Left cardiac atrium (tissue), 4 donors: ENCODE measurements at regions of chr11 and their contacts with region 1.

Region 1: GRCh38 chr11:65988791-65989592 is 13.0 kb downstream of the EIF1AD start:
- DNase-seq: peak; percentile 89
- ATAC-seq: peak; percentile 98 to 99

Region 2: DNA sequence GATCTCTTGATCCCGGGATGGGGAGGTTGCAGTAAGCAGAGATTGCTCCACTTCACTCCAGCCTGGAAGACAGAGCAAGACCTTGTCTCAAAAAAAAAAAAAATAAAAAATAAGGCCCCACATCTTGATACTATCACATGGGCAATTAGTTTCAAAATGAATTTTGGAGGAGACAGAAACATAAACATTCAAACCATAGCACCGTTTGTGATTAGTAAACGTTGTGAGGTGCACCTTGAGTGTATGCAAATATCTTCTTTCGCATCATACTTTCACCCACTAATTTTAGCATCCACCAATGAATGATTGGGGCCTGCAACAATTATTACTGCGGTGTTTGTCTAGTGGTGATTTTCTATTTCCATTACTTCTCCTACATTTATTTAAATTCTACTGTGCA is 830.0 kb before region 1 on chr11:
- intact Hi-C with region 1: no loop called
- DNase-seq: no peak
- ATAC-seq: no peak

Region 3: DNA sequence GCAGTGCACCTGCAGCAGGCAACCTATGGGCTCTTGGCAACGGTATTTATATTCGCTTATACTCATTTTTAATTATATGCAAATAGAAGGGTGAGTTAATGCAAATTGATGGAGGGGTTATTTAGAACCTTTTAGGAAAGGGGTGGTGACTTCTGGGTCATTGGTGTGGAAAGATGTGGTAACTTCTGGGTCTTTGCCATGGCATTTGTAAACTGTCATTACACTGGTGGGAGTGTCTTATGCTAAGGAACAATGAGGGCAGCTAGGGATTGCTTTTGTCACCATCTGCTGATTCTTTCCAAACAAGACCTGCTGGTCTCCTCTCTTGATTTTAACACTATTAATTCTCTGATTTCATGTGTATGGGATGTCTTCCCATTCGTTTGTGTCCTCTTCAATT is 288.6 kb before region 1 on chr11:
- intact Hi-C with region 1: loop called (anchors 5 to 10 kb)
- DNase-seq: no peak
- ATAC-seq: no peak

Region 4: GRCh38 chr11:65779851-65780577 is 209.0 kb before region 1 on chr11:
- intact Hi-C with region 1: loop called in 1 of 2 experiments (anchors 10 kb)
- DNase-seq: peak; percentile 83
- ATAC-seq: peak; percentile 83 to 89

Region 5: GRCh38 chr11:65888163-65888814 is 100.7 kb before region 1 on chr11 and contains the start of gene FIBP:
- intact Hi-C with region 1: loop called (anchors 2 to 5 kb)
- DNase-seq: peak; percentile 97
- ATAC-seq: peak; percentile 82 to 84
- total RNA-seq, gene FIBP: 37.8 to 44.3 TPM

Region 6: DNA sequence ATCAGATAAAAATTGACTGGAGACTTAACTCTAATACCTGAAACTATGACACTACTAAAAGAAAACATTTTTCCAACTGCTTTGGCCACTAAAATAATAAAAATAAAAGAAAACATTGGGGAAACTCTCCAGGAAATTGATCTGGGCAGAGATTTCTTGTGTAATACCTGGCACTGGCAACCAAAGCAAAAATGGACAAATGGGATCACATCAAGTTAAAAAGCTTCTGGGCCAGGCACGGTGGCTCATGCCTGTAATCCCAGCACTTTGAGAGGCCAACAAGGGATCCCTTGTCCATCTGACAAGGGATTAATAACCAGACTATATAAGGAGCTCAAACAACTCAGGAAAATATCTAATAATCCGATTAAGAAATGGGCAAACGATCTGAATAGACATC is 214.9 kb after region 1 on chr11:
- intact Hi-C with region 1: no loop called
- DNase-seq: no peak
- ATAC-seq: no peak